Panc1 (cell line): ENCODE measurements at regions of chr4 and their contacts with region 1.

Region 1: GRCh38 chr4:144174401-144175067 is 34.0 kb upstream of the GYPA start:
- DNase-seq: peak; percentile 24
- ATAC-seq: peak; percentile 56; the same call in 1 of the 2 replicates
- H3K4me3 ChIP-seq: no peak overlapping the region
- H3K27ac ChIP-seq: no peak overlapping the region
- H3K4me1 ChIP-seq: no peaks in the 10 kb centered on the region
- H3K27me3 ChIP-seq: no peaks in the 10 kb centered on the region
- CTCF ChIP-seq: peak; percentile 29; the same call in 1 of the 2 replicates

Region 2: GRCh38 chr4:143524211-143524610 is 650.3 kb before region 1 on chr4:
- CTCF ChIA-PET with region 1: no interaction called
- POLR2A ChIA-PET with region 1: no interaction called
- in situ Hi-C with region 1: no loop called
- intact Hi-C with region 1: no loop called
- DNase-seq: no peak
- ATAC-seq: no peak
- H3K4me3 ChIP-seq: no peak overlapping the region
- H3K27ac ChIP-seq: no peak overlapping the region
- H3K4me1 ChIP-seq: no peaks in the 10 kb centered on the region
- H3K27me3 ChIP-seq: no peaks in the 10 kb centered on the region
- CTCF ChIP-seq: no peak

Region 3: DNA sequence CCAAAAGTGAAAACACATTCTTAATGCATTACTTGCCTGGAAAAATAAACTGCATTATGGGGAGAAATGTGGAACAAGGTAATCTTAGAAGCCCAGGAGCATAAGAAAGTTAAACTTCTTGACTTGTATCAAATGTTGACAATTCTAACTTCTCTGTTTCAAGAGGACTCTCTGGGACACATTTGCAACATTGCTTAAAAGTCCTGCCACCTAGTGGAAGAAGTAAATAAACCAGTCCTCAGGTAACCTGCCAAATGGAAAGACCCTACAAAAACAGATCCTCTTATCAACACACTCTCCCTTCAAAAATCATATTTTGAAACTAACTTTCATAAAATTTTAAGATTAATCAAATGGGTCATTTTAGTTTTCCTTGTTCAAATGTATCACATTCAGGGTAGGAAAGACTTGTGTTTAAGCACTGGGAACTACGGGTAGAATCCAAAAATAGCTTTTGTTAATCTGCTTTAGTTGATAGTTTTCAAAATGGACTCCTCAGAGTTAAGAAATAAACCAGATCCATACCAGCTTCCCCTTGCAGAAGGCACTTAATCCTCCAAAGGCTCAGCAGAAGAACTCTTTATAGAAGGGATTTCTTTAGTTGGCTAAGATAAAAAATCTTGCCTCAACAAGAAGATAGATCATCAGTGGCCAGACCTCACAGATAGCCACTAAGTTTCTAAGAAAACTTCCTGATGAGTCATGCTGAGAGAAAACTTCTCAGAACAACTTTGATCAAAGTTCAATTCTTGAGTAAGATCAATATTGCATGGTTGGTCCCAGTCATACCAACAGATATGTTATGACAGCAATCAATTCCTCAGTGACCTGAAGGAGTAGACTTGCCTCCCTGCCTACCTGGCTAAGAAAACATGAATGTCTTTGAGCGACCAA is 613.1 kb after region 1 on chr4:
- CTCF ChIA-PET with region 1: no interaction called
- POLR2A ChIA-PET with region 1: no interaction called
- in situ Hi-C with region 1: no loop called
- intact Hi-C with region 1: loop called (anchors 10 kb)
- DNase-seq: peak; percentile 12
- ATAC-seq: no peak
- H3K4me3 ChIP-seq: no peak overlapping the region
- H3K27ac ChIP-seq: no peak overlapping the region
- H3K4me1 ChIP-seq: no peaks in the 10 kb centered on the region
- H3K27me3 ChIP-seq: no peaks in the 10 kb centered on the region
- CTCF ChIP-seq: peak; percentile 31; the same call in 1 of the 2 replicates

Region 4: GRCh38 chr4:145061318-145061920 is 886.9 kb after region 1 on chr4:
- CTCF ChIA-PET with region 1: no interaction called
- POLR2A ChIA-PET with region 1: no interaction called
- in situ Hi-C with region 1: no loop called
- intact Hi-C with region 1: loop called (anchors 2 kb)
- DNase-seq: peak; percentile 28
- ATAC-seq: no peak; the same call in 1 of the 2 replicates
- H3K4me3 ChIP-seq: no peak overlapping the region
- H3K27ac ChIP-seq: no peak overlapping the region
- H3K4me1 ChIP-seq: peaks cover 5% of the 10 kb centered on the region
- H3K27me3 ChIP-seq: no peaks in the 10 kb centered on the region
- CTCF ChIP-seq: peak; percentile 19; the same call in 1 of the 2 replicates

Region 5: DNA sequence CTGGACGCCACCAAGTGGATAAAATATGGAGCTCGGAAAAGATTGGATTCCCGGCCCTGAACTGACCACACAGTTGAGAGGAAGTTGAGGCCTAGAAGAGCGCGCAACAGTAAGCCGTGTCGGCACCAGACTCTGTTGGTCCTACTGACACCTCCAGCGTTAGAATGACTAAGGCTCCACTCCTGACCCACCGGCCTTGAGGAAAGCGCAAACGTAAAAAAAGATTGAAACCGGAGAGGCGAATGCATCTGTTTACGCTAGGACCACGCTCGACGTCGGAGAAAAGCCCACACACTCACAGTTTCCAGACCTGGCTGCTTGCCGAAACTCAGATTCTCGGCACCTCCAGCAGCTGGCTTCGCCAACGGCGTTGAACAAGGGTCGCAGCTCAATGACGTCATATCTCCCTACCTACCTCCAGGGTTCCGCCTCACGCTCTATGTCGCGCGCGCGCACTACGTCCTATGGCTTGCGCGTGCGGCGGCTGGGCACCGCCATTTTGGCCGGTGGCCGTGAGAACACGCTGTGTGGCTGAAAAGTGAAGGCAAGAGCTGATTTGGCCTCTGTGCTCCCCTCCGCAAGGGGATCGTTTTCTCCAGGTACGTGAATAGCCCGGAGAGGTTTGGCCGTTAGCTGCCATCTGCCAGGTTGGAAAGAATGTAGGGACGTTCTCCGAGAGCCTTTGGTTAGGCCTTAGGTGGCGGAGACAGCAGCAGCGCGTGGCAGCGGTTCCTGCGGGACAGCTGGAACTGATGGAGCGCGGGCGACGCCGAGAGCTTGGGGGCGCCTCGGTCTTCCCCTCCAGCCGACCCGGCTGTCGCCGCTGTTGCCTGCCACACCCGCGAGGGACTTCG is 923.5 kb after region 1 on chr4 and contains the starts of genes ABCE1 and ANAPC10:
- CTCF ChIA-PET with region 1: interaction called, 12 read pairs
- POLR2A ChIA-PET with region 1: no interaction called
- in situ Hi-C with region 1: no loop called
- intact Hi-C with region 1: no loop called
- DNase-seq: peak; percentile 70
- ATAC-seq: peak; percentile 96
- H3K4me3 ChIP-seq: peak within 1 kb of the TSS; percentile 87 to 91
- H3K27ac ChIP-seq: peak within 1 kb of the TSS; percentile 95
- H3K4me1 ChIP-seq: peaks cover 12% of the 10 kb centered on the region
- H3K27me3 ChIP-seq: no peaks in the 10 kb centered on the region
- CTCF ChIP-seq: peak; percentile 9; the same call in 1 of the 2 replicates
- total RNA-seq, gene ABCE1: 73.7 TPM
- total RNA-seq, gene ANAPC10: 10.5 TPM